Activated CD4-positive, alpha-beta T cell treated with anti-CD3 and anti-CD28 coated beads for 36 hours (primary cell): ENCODE measurements at regions of chr6 and their contacts with region 1.

Region 1: DNA sequence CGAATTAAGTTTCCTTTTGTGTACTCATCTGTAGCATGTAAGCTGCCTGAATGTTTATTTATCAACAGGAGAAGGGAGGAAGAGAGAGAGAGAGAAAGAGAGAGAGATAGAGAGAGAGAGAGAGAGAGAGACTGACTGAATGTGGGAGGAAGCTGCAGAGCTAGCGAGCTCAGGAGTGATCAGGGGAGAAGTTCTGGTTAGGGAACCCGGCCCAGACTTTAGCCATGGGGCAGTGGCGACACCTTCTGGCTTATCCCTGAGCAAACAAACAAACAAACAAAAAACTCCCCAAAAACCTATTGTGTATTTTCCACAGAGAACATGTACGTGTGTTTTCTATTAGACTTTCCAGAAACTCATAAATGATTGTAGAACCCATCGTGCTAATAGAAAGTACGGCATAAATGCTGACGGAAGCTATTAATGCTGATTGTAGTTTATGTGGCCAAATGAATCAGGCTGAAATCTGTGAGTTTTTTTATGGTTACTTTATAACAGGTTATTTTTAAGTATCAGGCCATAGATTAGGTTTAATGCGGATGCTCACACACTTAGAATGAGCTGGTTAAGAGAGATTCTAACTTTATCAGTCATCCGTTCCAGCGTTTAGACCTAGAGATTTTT is 92.8 kb downstream of the CLIC5 start:
- DNase-seq: peak; percentile 83
- ATAC-seq: peak; percentile 22
- H3K4me3 Mint-ChIP-seq: peak overlapping the region; percentile 15
- H3K27ac Mint-ChIP-seq: peak overlapping the region; percentile 90
- H3K4me1 Mint-ChIP-seq: peaks cover 53% of the 10 kb centered on the region
- H3K27me3 Mint-ChIP-seq: no peaks in the 10 kb centered on the region

Region 2: GRCh38 chr6:44655412-44656342 is 1267.2 kb before region 1 on chr6:
- CTCF ChIA-PET with region 1: interaction called, 10 read pairs
- POLR2A ChIA-PET with region 1: no interaction called
- intact Hi-C with region 1: loop called (anchors 1 to 2 kb)
- DNase-seq: peak; percentile 85
- ATAC-seq: peak; percentile 77
- H3K4me3 Mint-ChIP-seq: no peak overlapping the region
- H3K27ac Mint-ChIP-seq: peak overlapping the region; percentile 75
- H3K4me1 Mint-ChIP-seq: peaks cover 13% of the 10 kb centered on the region
- H3K27me3 Mint-ChIP-seq: peaks cover 4% of the 10 kb centered on the region

Region 3: DNA sequence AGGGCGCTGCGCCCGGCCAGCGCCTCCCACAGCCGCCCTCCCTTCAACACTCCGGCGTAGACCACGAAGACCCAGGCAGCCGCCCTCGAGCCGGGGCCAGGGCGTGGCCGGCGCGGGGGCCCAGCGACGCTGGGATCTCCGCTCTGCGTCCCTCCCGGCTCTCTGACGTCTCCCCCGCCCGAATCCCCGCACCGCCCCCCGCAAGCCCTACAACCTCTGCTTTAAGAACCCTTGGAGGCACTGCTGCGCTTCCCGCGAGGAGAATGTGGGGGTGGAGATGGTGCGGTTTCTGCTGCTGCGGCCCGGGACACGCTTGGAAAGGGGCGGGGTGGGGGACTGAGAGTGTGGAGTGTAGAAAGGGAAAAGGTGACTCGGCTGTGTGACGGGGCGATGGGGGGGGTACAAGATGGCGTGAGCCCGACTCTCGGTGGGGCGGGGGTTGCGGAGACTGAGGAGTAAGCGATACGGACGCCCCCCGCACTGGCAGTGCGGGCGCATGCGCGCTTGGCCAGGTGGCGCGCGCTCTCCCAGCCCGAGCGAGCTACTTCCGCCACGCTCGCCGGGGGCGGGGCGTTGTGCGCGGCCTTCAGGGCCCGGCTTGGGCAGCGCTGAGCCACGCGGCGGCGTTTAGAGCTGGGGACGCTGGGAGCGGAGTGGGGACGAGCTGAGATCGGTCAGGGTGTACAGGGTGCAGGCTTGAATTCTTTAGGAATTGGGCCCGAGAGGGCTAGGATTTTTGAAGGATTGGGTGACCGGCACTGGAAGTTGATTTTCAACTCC is 545.1 kb before region 1 on chr6 and contains the start of gene SUPT3H:
- CTCF ChIA-PET with region 1: interaction called, 6 read pairs
- POLR2A ChIA-PET with region 1: interaction called, 3 read pairs
- intact Hi-C with region 1: loop called (anchors 1 kb)
- DNase-seq: peak; percentile 97
- ATAC-seq: peak; percentile 89
- H3K4me3 Mint-ChIP-seq: peak within 1 kb of the TSS; percentile 99
- H3K27ac Mint-ChIP-seq: peak within 1 kb of the TSS; percentile 100
- H3K4me1 Mint-ChIP-seq: peaks cover 22% of the 10 kb centered on the region
- H3K27me3 Mint-ChIP-seq: no peaks in the 10 kb centered on the region
- total RNA-seq, gene SUPT3H: 15.5 TPM

Region 4: GRCh38 chr6:45486736-45487135 is 436.1 kb before region 1 on chr6:
- CTCF ChIA-PET with region 1: no interaction called
- POLR2A ChIA-PET with region 1: no interaction called
- intact Hi-C with region 1: loop called (anchors 2 to 5 kb)
- DNase-seq: peak; percentile 50
- ATAC-seq: peak; percentile 94
- H3K4me3 Mint-ChIP-seq: no peak overlapping the region
- H3K27ac Mint-ChIP-seq: peak overlapping the region; percentile 58
- H3K4me1 Mint-ChIP-seq: peaks cover 53% of the 10 kb centered on the region
- H3K27me3 Mint-ChIP-seq: peaks cover 2% of the 10 kb centered on the region

Region 5: GRCh38 chr6:45801471-45802289 is 121.2 kb before region 1 on chr6:
- CTCF ChIA-PET with region 1: interaction called, 3 read pairs
- POLR2A ChIA-PET with region 1: interaction called, 3 read pairs
- intact Hi-C with region 1: loop called (anchors 1 to 2 kb)
- DNase-seq: peak; percentile 80
- ATAC-seq: peak; percentile 82
- H3K4me3 Mint-ChIP-seq: no peak overlapping the region
- H3K27ac Mint-ChIP-seq: peak overlapping the region; percentile 72
- H3K4me1 Mint-ChIP-seq: peaks cover 22% of the 10 kb centered on the region
- H3K27me3 Mint-ChIP-seq: peaks cover 2% of the 10 kb centered on the region

Region 6: GRCh38 chr6:46011241-46012085 is 88.6 kb after region 1 on chr6:
- CTCF ChIA-PET with region 1: no interaction called
- POLR2A ChIA-PET with region 1: interaction called, 6 read pairs
- intact Hi-C with region 1: loop called (anchors 1 to 5 kb)
- DNase-seq: peak; percentile 74
- ATAC-seq: peak; percentile 86
- H3K4me3 Mint-ChIP-seq: peak overlapping the region; percentile 39
- H3K27ac Mint-ChIP-seq: peak overlapping the region; percentile 58
- H3K4me1 Mint-ChIP-seq: peaks cover 51% of the 10 kb centered on the region
- H3K27me3 Mint-ChIP-seq: peaks cover 1% of the 10 kb centered on the region

Region 7: DNA sequence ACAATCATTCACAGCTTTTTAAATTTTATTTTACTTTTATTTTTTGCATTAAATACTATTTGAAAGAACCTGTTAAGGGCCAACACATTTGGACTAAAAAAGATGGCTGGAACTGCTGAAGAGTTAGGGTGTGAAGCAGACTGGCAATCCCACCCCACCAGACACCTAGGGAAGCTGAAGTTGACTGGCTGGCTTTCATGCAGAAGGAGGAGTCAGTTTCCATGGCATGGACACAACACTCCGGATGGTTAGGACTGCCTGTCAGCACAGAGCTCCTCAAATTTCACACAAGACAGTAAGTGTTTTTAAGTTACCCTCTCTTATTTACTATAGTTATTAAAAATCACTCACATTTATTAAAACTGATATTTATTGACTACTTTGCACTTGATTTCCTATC is 823.9 kb after region 1 on chr6 and contains the start of gene ANKRD66:
- CTCF ChIA-PET with region 1: no interaction called
- POLR2A ChIA-PET with region 1: no interaction called
- intact Hi-C with region 1: no loop called
- DNase-seq: no peak
- ATAC-seq: no peak
- H3K4me3 Mint-ChIP-seq: no peak within 1 kb of the TSS
- H3K27ac Mint-ChIP-seq: no peak within 1 kb of the TSS
- H3K4me1 Mint-ChIP-seq: no peaks in the 10 kb centered on the region
- H3K27me3 Mint-ChIP-seq: peaks cover 14% of the 10 kb centered on the region
- total RNA-seq, gene ANKRD66: not detected